ENCODE measurements at regions of chr5 and their contacts with region 1.

Region 1: DNA sequence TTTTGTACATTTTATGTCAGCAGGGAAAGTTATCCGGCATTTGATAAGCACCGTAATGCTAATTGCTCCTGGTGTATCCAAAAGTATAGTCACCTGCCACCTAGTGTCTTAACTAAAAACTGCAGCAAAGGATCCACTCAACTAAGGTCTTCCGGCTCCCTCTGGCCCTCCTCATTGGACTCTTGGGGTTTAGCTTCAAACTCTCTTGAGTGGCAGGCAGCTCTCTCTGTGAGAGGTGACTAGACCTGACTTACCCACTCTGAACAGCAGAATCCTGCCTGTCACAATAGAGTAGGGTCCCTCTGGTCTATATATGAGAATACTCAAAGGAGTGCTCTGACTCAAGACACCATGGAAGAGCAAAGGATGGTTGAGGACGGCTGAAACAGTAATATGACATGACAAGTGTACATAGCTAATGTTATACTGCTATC is 60.3 kb upstream of the CAST start:
- H3K4me3 Mint-ChIP-seq: no peak overlapping the region
- H3K27ac Mint-ChIP-seq: no peak overlapping the region
- H3K4me1 Mint-ChIP-seq: no peaks in the 10 kb centered on the region
- H3K27me3 Mint-ChIP-seq: peaks cover 11% of the 10 kb centered on the region

Region 2: DNA sequence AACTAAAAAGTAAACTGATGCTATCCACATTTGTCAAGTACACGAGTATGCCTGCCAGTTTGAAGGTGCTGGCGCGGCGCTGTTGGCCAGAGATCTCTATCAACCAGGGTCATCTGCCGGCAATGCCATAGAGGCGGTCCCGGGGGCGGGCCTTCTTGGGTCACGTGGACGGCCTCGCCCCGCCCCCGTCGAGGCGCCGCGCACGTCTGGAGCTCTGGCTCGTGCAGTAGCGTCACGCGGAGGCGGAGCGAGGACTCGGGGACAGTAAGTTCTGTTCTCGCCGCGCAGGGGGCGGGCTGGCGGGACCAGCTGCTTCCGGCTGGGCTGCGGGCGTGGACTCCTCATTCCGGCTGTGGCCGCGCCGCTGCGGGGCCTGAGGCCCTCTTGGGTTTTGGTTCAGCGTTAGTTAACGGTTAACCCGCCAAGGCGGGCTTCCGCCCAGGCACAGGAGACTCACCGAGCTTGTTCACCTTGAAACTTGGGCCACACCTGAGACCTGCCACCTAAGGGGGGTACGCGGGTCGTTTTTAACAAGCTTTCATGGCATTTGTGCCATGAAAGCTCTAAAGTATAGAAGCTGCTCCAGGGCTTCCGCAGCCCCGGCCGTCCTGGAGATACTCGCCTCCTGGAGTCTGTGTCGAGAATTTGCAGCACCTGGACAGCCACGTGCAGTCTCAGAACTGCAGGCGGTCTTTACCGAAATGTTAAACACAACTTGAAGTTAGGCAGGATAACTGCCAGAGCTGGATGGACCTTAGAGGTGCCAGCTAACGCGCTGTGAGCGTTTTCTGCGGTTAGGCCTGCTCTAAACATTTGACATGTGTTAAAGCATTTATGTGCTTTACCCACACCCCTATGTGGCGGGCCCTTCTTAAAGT is 955.0 kb before region 1 on chr5 and contains the start of gene RFESD:
- intact Hi-C with region 1: loop called (anchors 10 kb)
- H3K4me3 Mint-ChIP-seq: peak within 1 kb of the TSS; percentile 77
- H3K27ac Mint-ChIP-seq: peak within 1 kb of the TSS; percentile 92
- H3K4me1 Mint-ChIP-seq: peaks cover 6% of the 10 kb centered on the region
- H3K27me3 Mint-ChIP-seq: no peaks in the 10 kb centered on the region

Region 3: GRCh38 chr5:95858661-95859326 is 743.0 kb before region 1 on chr5:
- intact Hi-C with region 1: loop called (anchors 1 kb)
- H3K4me3 Mint-ChIP-seq: peak overlapping the region; percentile 58
- H3K27ac Mint-ChIP-seq: no peak overlapping the region
- H3K4me1 Mint-ChIP-seq: peaks cover 54% of the 10 kb centered on the region
- H3K27me3 Mint-ChIP-seq: peaks cover 6% of the 10 kb centered on the region

Region 4: DNA sequence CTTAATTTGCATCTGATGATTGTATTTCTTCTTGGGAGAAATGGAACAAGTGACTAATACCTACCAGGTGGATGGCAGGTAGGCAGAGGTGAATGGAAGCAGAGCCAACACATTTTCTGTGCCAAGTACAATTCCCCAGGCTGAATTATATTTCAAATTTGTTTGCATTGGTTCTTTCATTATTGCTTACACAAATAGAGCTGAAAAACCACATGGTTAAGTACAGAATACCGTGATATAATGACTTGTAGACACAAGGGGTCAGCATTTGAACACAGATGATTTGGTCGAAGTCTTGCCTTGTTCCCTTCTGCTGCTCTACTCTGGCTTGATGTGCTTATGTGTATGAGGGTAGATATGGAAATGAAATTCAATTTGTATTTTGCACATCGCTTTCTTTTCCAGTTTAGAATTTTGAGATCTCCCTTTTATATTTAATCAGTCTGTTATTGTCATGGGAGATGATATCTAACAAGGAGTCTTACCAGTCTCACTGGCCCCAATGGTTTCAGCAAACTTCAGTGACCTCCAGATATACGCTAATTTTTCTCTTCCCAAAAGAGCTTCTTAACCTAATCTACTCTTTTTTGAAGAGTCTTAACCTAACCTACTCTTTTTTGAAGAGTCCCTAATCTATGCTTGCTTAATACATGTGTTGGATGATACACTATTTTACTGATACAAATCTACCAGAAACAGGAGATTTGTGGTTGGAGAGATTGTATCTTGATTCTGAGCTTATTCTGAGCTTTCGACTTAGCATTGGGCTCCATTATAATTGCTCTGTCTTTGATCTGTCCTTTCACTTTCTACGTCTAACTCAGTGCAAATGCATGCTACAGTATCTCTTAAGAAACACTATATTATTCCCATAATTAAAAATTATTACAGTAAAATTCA is 256.9 kb before region 1 on chr5:
- intact Hi-C with region 1: loop called (anchors 2 kb)
- H3K4me3 Mint-ChIP-seq: no peak overlapping the region
- H3K27ac Mint-ChIP-seq: no peak overlapping the region
- H3K4me1 Mint-ChIP-seq: peaks cover 5% of the 10 kb centered on the region
- H3K27me3 Mint-ChIP-seq: no peaks in the 10 kb centered on the region

Region 5: DNA sequence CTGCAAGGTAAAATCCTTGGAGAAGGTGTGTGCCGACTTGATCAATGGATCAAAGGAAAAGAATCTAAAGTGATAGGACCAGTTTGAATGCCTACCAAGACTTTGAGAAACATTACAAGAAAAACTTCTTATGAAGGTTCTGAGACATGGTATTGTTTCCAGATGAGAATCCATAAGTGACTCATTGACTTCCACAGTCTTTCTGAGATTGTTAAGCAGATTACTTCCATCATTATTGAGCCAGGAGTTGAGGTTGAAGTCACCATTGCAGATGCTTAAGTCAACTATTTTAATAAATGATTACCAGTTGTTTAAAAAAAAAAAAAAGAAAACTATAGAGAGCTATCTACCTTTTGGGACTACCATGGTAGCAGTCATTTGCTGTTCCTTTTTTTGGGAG is 341.1 kb after region 1 on chr5:
- intact Hi-C with region 1: no loop called
- H3K4me3 Mint-ChIP-seq: no peak overlapping the region
- H3K27ac Mint-ChIP-seq: no peak overlapping the region
- H3K4me1 Mint-ChIP-seq: peaks cover 30% of the 10 kb centered on the region
- H3K27me3 Mint-ChIP-seq: no peaks in the 10 kb centered on the region

Measured in dendritic cell treated with granulocyte-macrophage colony-stimulating factor and Interleukin-4, amounts not matched to agents 40 ng/mL and 50 ng/mL, for 4 days (primary cell).